Naive thymus-derived CD8-positive, alpha-beta T cell (primary cell): ENCODE measurements at regions of chr2 and their contacts with region 1.

Region 1: GRCh38 chr2:113876503-113877387 is 13.1 kb upstream of the ACTR3 start:
- DNase-seq: peak; percentile 57 to 88 (median 76)
- ATAC-seq: peak; percentile 92
- H3K4me3 Mint-ChIP-seq: peak overlapping the region; percentile 61 to 83 (median 77)
- H3K27ac Mint-ChIP-seq: peak overlapping the region; percentile 87 to 97 (median 94)
- H3K4me1 Mint-ChIP-seq: peaks cover 15 to 53% (median 46%) of the 10 kb centered on the region in 4 donors
- H3K27me3 Mint-ChIP-seq: no peaks in the 10 kb centered on the region

Region 2: DNA sequence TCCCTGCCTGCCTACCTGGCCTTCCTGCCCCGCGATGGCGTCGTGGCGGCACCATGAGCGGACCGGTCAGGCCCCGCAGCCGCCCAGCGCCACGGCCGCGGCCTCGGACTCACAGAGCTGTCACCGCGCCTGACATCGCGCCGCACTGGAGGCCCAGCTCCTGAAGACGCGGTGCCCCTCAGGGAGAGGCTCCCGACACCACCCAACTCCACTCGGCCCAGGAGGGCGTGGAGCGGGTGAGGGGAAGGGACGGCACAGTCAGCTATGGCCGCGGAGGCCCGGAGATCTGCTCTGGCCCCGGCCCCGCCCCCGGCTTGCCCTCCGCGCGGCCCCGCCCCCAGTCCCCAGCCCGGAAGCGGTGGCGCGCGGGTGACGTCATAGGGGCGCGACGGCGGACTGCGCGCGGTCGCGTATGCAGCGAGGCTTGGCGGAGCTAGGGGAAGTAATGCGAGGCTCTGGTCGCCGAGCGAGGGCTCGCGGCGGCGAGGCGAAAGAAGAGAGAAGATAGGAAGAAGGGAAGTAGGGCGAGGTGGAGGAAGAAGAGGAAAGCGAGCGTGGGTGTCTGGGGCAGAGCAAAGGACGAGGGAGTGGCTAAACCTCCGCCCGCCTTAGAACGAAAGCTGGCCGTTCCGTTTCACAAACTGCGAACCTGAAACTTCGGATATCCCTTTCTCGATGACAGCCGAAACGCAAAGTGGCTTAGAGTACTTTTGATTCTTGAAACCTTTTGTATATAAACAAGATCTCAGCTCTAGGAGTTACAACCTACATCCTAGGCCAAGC is 120.2 kb before region 1 on chr2 and contains the start of gene SLC35F5:
- POLR2A ChIA-PET with region 1: interaction called, 12 read pairs
- DNase-seq: peak; percentile 85 to 97 (median 94)
- ATAC-seq: peak; percentile 86 to 87
- H3K4me3 Mint-ChIP-seq: peak within 1 kb of the TSS; percentile 86 to 100 (median 98)
- H3K27ac Mint-ChIP-seq: peak within 1 kb of the TSS; percentile 98 to 100 (median 100)
- H3K4me1 Mint-ChIP-seq: peaks cover 7 to 37% (median 22%) of the 10 kb centered on the region in 4 donors
- H3K27me3 Mint-ChIP-seq: peaks cover 0 to under 1% (median 0%) of the 10 kb centered on the region in 5 donors
- polyA plus RNA-seq, gene SLC35F5: 6.2 to 8.2 (median 7.1) TPM

Region 3: GRCh38 chr2:113791697-113792590 is 84.8 kb before region 1 on chr2:
- POLR2A ChIA-PET with region 1: no interaction called
- DNase-seq: no peak
- ATAC-seq: no peak
- H3K4me3 Mint-ChIP-seq: peak overlapping the region in 1 of 10 donors; percentile 34
- H3K27ac Mint-ChIP-seq: no peak overlapping the region
- H3K4me1 Mint-ChIP-seq: peaks cover 0 to 12% (median 1%) of the 10 kb centered on the region in 4 donors
- H3K27me3 Mint-ChIP-seq: peaks cover 0 to 3% (median 0%) of the 10 kb centered on the region in 5 donors

Region 4: DNA sequence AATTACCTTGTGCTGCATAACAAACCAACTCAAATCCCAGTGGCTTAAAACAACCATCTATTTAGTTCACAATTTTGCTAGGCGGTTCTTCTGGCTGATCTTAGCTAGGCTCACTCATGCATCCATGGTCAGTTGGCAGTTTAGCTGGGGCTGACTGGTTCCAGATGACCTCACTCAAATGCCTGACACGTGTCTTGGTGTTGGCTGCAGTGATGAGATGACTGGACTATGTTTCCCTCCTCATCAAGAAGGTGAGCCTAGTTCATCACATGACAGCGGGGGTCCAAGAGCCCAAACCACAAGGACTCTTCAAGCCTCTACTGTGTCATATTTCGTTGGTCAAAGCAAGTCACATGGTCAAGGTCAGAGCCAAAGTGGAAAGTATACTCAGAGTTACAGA is 29.6 kb before region 1 on chr2:
- POLR2A ChIA-PET with region 1: no interaction called
- DNase-seq: no peak
- ATAC-seq: no peak
- H3K4me3 Mint-ChIP-seq: no peak overlapping the region
- H3K27ac Mint-ChIP-seq: no peak overlapping the region
- H3K4me1 Mint-ChIP-seq: peaks cover 0 to 4% (median 3%) of the 10 kb centered on the region in 4 donors
- H3K27me3 Mint-ChIP-seq: no peaks in the 10 kb centered on the region

Region 5: DNA sequence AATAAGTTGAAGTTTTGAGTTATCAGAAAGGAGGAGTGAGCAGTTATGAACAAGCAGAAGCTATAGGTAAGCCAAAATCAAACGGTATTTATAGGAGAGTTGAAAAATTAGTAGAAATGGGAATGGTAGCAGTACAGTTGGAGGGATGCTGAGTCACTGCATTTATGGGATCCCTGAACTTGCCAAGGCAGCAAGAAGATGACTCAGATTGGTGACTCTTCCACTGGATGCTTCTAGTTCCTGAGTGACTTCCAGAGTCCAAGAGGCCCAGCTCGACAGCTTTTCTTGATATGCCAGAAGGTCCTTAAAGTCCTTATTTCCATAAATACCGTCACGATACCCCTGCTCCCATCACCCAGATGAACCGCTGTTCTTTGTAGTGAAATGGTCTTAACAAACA is 18.0 kb before region 1 on chr2:
- POLR2A ChIA-PET with region 1: no interaction called
- DNase-seq: no peak
- ATAC-seq: no peak
- H3K4me3 Mint-ChIP-seq: peak overlapping the region in 1 of 10 donors; percentile 22
- H3K27ac Mint-ChIP-seq: peak overlapping the region in 1 of 10 donors; percentile 87
- H3K4me1 Mint-ChIP-seq: peaks cover 6 to 64% (median 9%) of the 10 kb centered on the region in 4 donors
- H3K27me3 Mint-ChIP-seq: no peaks in the 10 kb centered on the region

Region 6: GRCh38 chr2:113889471-113890252 is 12.9 kb after region 1 on chr2 and contains the start of gene ACTR3:
- POLR2A ChIA-PET with region 1: interaction called, 27 read pairs
- DNase-seq: peak; percentile 95 to 100 (median 98)
- ATAC-seq: peak; percentile 84 to 88
- H3K4me3 Mint-ChIP-seq: peak within 1 kb of the TSS; percentile 92 to 99 (median 98)
- H3K27ac Mint-ChIP-seq: peak within 1 kb of the TSS; percentile 83 to 99 (median 98)
- H3K4me1 Mint-ChIP-seq: peaks cover 39 to 84% (median 79%) of the 10 kb centered on the region in 4 donors
- H3K27me3 Mint-ChIP-seq: no peaks in the 10 kb centered on the region
- polyA plus RNA-seq, gene ACTR3: 390 to 476 (median 471) TPM